CD14-positive monocyte (primary cell): ENCODE measurements at regions of chr2 and their contacts with region 1.

Region 1: DNA sequence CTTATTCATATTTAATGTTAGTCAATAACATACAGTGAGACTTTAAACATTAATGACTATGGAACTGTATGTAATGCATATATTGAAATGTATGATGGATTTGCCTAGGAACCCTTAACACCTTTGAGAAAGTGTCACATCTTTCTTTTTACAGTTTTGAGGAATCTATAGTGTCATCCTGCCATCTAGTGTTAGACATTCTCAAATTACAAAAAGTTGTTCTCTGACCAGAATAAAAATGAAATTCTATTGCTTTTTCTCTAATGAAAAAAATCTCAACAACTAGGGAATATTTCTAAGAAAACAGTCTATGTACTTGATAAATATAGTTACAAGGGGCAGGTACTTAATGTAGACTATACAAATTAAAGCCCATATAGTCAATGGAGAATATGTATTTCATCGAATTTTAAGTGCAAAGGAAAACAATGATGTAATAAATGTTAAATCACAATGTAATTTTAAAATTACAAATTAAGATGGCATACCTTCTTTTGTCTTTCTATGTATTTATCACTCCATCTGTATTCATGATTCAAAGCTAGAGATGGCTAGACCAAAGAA is 5.1 kb upstream of the CALCRL start:
- DNase-seq: peak; percentile 4 to 20 (median 11)
- H3K4me3 ChIP-seq: no peak overlapping the region
- H3K4me3 Mint-ChIP-seq: no peak overlapping the region
- H3K27ac ChIP-seq: no peak overlapping the region
- H3K27ac Mint-ChIP-seq: no peak overlapping the region
- H3K4me1 ChIP-seq: peaks cover 5% of the 10 kb centered on the region in 2 donors
- H3K4me1 Mint-ChIP-seq: peaks cover 5% of the 10 kb centered on the region
- H3K27me3 ChIP-seq: no peaks in the 10 kb centered on the region
- H3K27me3 Mint-ChIP-seq: no peaks in the 10 kb centered on the region
- CTCF ChIP-seq: peak; percentile 68

Region 2: GRCh38 chr2:186862869-186863709 is 590.1 kb before region 1 on chr2:
- intact Hi-C with region 1: loop called (anchors 10 kb)
- DNase-seq: peak; percentile 6 to 18 (median 17)
- H3K4me3 ChIP-seq: no peak overlapping the region
- H3K4me3 Mint-ChIP-seq: no peak overlapping the region
- H3K27ac ChIP-seq: no peak overlapping the region
- H3K27ac Mint-ChIP-seq: no peak overlapping the region
- H3K4me1 ChIP-seq: peaks cover 0 to 2% of the 10 kb centered on the region in 2 donors
- H3K4me1 Mint-ChIP-seq: peaks cover 9% of the 10 kb centered on the region
- H3K27me3 ChIP-seq: no peaks in the 10 kb centered on the region
- H3K27me3 Mint-ChIP-seq: peaks cover 0 to 2% (median 2%) of the 10 kb centered on the region in 3 donors
- CTCF ChIP-seq: peak; percentile 69

Region 3: DNA sequence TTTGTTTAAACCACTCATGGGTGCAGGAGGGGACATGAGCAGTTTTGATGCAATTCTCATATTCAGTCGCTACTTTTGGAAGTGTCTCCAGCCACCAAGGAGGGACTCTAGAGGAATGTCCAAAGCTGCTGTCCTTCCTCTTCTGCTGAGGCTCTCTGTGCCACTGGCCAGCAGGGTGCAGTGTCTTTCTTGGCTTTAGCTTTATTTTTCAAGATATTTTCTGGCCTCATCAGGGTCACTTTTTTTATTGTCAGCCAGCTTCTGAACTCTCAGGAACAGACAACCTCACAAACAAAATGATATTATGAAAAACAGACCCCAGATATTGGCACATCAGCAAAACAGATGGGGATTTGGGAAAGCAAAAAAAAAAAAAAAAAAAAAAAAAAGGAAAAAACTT is 314.9 kb before region 1 on chr2:
- intact Hi-C with region 1: loop called in 1 of 2 experiments (anchors 10 kb)
- DNase-seq: peak; percentile 4 to 32 (median 6)
- H3K4me3 ChIP-seq: no peak overlapping the region
- H3K4me3 Mint-ChIP-seq: no peak overlapping the region
- H3K27ac ChIP-seq: no peak overlapping the region
- H3K27ac Mint-ChIP-seq: peak overlapping the region in 1 of 7 donors; percentile 32
- H3K4me1 ChIP-seq: no peaks in the 10 kb centered on the region
- H3K4me1 Mint-ChIP-seq: no peaks in the 10 kb centered on the region
- H3K27me3 ChIP-seq: no peaks in the 10 kb centered on the region
- H3K27me3 Mint-ChIP-seq: peaks cover 0 to 3% (median 0%) of the 10 kb centered on the region in 3 donors
- CTCF ChIP-seq: peak; percentile 58